K562 (cell line): ENCODE measurements at regions of chr7 and their contacts with region 1.

Region 1: DNA sequence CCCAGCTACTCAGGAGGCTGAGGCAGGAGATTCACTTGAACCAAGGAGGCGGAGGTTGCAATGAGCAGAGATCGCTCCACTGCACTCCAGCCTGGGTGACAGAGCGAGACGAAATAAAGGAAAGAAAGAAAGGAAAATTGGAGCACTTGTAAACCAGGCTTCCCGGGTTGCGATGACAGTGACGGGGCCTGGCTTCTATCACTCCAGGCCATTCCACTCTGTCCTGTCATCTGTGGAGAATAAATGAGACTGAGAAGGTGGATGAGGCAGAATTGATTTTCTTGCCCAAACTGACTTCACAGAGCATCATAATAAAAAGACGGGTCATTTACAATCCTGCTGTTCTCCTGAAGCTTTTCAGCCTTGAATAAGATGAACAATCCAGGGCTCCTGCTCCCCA is 12.1 kb upstream of the KPNA7 start:
- DNase-seq: no peak
- ATAC-seq: no peak
- H3K4me3 ChIP-seq: no peak overlapping the region
- H3K27ac ChIP-seq: no peak overlapping the region
- H3K4me1 ChIP-seq: peaks cover 11 to 16% of the 10 kb centered on the region in 2 experiments
- H3K27me3 ChIP-seq: peaks cover 21 to 40% of the 10 kb centered on the region in 2 experiments
- CTCF ChIP-seq: no peak
- EP300 ChIP-seq: no peak
- POLR2A ChIP-seq: no peak
- RAD21 ChIP-seq: no peak

Region 2: DNA sequence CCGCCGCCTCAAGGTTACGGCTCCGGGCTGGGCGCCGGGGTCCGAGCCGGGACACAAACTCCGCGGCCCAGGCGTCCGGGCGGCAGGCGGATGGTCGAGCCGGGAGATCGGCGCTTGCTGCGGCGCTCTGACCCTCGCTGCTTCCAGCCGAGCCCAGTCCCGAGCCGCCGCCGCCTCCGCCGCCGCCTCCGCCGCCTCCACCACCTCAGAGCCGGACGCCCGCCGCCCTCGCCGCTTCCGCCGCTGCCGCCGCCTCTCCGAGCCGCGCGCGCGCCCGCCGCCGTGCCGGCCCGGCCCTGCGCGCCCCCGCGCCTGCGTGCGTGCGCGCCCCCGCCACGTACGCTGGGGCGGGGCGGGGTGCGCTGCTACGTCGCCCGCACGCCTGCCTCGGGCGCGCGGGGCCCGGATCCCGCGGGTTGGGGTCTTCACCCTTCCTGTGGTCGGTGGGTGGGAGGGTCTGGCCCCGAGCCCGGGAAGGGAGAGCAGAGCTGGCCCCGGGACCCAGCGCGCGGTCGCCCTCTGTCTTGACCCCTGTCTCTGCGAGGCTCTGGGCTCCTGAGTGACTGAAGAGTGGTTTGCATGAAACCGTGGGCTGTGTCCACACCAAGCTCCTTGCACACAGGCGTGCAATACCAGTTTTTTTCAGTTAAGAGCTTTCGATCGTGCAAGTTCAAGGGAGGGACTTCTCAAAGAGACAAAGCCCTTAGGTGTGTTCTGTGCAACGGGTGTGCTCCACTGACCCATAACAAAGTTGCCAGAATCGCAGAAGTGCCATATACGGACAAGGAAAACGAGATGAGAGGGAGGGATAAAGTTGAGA is 75.9 kb before region 1 on chr7 and contains the start of gene SMURF1:
- CTCF ChIA-PET with region 1: no interaction called
- POLR2A ChIA-PET with region 1: no interaction called
- in situ Hi-C with region 1: no loop called
- intact Hi-C with region 1: loop called (anchors 10 kb)
- DNase-seq: peak; percentile 83 to 92 (median 89)
- ATAC-seq: peak; percentile 55
- H3K4me3 ChIP-seq: peak within 1 kb of the TSS; percentile 75
- H3K27ac ChIP-seq: peak within 1 kb of the TSS; percentile 91
- H3K4me1 ChIP-seq: peaks cover 10 to 18% of the 10 kb centered on the region in 2 experiments; a peak in 4 of 5 replicates
- H3K27me3 ChIP-seq: no peaks in the 10 kb centered on the region
- CTCF ChIP-seq: no peak
- EP300 ChIP-seq: no peak
- POLR2A ChIP-seq: peak; percentile 86
- RAD21 ChIP-seq: peak; percentile 13 to 15; a peak in 2 of 4 replicates
- polyA plus RNA-seq, gene SMURF1: 1.0 to 1.3 TPM